Calu3 (cell line): ENCODE measurements at regions of chr11 and their contacts with region 1.

Region 1: DNA sequence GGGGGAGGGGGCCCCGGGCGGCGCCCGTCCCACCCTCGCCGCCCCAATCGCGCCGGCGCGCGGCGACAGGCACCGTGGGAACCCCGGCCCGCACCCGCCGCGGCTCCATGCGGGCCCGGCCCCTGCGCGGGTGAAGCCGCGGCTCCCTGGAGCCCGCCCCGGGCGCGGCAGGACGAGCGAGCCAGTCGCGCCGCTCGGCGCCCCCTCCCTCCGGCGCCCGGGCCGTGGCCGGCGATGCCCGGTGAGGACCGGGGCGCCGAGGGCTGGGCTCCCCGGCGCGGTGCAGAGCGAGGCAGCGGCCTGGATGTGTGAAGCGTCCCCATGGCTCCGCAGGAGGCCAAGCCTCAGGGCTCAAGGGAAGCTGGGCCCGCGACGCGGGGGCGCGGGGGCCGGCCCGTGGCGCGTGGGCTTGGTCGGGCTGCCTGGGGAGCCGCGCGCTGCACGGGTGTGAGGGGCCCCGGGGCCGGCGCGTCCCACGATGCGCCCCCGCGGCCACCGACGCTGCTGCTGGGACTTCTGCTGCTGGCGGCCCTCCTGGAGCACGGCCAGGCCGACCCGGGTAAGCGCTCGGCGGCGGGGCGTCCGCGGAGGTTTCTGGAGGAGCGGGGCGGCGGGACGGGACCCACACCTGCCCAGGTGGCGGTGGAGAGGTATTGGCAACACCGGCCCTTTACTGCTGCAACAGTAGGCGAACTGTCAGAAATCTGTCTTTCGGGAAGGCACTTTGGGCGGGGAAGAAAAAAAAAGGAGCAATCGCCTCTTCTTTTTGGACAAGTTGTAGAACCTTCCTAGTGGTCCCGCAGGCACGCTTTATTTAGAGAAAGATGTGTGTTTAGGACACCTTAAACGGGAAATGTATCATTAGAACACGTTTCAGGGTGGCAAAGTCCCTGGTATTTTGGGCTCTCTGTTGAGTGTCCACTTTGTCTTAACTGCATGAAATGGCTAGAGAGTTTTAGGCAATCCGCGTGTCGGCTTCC is 119.4 kb downstream of the HIPK3 start:
- DNase-seq: peak; percentile 59
- H3K4me3 Mint-ChIP-seq: peak overlapping the region; percentile 68
- H3K27ac Mint-ChIP-seq: no peak overlapping the region
- H3K4me1 Mint-ChIP-seq: peaks cover 39% of the 10 kb centered on the region
- H3K27me3 Mint-ChIP-seq: no peaks in the 10 kb centered on the region
- CTCF ChIP-seq: no peak

Region 2: DNA sequence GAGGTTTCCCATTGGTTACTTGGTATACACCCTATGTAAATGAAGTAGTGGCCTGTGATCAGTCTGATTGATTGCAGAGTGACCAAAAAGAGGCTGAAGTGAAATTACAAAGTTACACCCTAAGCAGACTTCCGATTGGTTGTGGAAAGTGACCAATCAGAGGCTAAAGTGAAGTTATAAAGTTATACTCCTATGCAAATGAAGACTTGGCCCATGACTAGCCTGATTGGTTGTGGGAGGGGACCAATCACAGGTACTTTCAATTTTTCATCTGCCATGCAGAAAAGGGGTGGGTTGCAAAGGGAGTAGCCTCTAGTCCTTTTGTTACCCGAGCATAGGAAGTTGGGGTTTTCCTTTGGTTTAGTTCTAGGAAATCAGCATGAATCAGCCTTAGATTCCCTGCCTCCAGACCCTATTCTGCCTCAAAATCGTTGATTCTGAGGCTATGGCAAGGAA is 197.2 kb before region 1 on chr11:
- CTCF ChIA-PET with region 1: no interaction called
- intact Hi-C with region 1: no loop called
- DNase-seq: no peak
- H3K4me3 Mint-ChIP-seq: no peak overlapping the region
- H3K27ac Mint-ChIP-seq: no peak overlapping the region
- H3K4me1 Mint-ChIP-seq: peaks cover 17% of the 10 kb centered on the region
- H3K27me3 Mint-ChIP-seq: no peaks in the 10 kb centered on the region
- CTCF ChIP-seq: no peak

Region 3: GRCh38 chr11:33531743-33532181 is 155.1 kb after region 1 on chr11:
- CTCF ChIA-PET with region 1: no interaction called
- intact Hi-C with region 1: loop called (anchors 10 kb)
- DNase-seq: no peak
- H3K4me3 Mint-ChIP-seq: no peak overlapping the region
- H3K27ac Mint-ChIP-seq: no peak overlapping the region
- H3K4me1 Mint-ChIP-seq: peaks cover 27% of the 10 kb centered on the region
- H3K27me3 Mint-ChIP-seq: no peaks in the 10 kb centered on the region
- CTCF ChIP-seq: no peak